PC-9 (cell line): ENCODE measurements at regions of chr15 and their contacts with region 1.

Region 1: DNA sequence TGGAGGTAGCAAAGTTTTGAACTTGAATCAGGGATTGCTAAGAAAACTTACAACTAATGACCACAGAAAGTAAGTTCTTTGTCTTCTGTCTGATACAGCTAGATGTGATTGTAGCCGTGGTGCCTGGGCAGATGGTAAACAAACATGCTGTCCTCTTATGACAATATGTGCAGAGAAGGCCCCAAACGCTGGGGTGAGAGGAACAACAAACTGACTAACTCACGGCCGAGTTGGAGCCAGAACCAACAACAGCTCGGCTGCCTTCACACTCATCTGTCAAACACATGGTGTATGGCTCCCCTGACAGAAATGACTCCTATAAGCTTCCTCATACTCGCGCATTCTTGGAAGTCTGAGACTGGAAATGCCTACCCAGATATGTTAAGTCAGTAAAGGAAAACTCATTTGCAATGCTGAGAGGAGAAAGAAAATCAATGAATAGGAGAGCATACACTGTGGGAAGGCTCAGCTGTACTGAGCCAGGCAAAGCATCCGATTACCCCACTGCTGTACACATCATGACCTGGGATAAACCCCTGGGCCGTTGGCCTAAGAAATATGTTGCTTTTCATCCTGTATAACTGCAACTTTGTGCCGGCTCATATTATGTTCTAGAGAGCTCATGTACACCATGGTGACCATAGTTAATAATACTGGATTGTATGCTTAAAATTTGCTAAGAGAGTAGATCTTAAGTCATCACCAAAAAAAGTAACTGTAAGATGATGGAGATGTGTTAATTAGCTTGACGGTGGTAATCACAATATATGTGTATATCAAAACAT is 5.7 kb downstream of the THBS1 start:
- DNase-seq: no peak
- H3K4me3 ChIP-seq: no peak overlapping the region
- H3K27ac ChIP-seq: no peak overlapping the region
- H3K4me1 ChIP-seq: peaks cover 11% of the 10 kb centered on the region; the same call in 1 of the 2 replicates
- H3K27me3 ChIP-seq: no peaks in the 10 kb centered on the region
- CTCF ChIP-seq: no peak

Region 2: GRCh38 chr15:39553947-39554693 is 32.5 kb before region 1 on chr15:
- CTCF ChIA-PET with region 1: no interaction called
- POLR2A ChIA-PET with region 1: no interaction called
- intact Hi-C with region 1: no loop called
- DNase-seq: no peak
- H3K4me3 ChIP-seq: no peak overlapping the region
- H3K27ac ChIP-seq: no peak overlapping the region
- H3K4me1 ChIP-seq: no peaks in the 10 kb centered on the region
- H3K27me3 ChIP-seq: no peaks in the 10 kb centered on the region
- CTCF ChIP-seq: no peak

Region 3: GRCh38 chr15:39642011-39642640 is 55.5 kb after region 1 on chr15:
- CTCF ChIA-PET with region 1: interaction called, 4 read pairs
- POLR2A ChIA-PET with region 1: interaction called, 10 read pairs
- intact Hi-C with region 1: no loop called
- DNase-seq: peak; percentile 33 to 87
- H3K4me3 ChIP-seq: peak overlapping the region; percentile 45; the same call in 1 of the 2 replicates
- H3K27ac ChIP-seq: peak overlapping the region; percentile 99
- H3K4me1 ChIP-seq: peaks cover 29% of the 10 kb centered on the region
- H3K27me3 ChIP-seq: no peaks in the 10 kb centered on the region
- CTCF ChIP-seq: no peak

Region 4: DNA sequence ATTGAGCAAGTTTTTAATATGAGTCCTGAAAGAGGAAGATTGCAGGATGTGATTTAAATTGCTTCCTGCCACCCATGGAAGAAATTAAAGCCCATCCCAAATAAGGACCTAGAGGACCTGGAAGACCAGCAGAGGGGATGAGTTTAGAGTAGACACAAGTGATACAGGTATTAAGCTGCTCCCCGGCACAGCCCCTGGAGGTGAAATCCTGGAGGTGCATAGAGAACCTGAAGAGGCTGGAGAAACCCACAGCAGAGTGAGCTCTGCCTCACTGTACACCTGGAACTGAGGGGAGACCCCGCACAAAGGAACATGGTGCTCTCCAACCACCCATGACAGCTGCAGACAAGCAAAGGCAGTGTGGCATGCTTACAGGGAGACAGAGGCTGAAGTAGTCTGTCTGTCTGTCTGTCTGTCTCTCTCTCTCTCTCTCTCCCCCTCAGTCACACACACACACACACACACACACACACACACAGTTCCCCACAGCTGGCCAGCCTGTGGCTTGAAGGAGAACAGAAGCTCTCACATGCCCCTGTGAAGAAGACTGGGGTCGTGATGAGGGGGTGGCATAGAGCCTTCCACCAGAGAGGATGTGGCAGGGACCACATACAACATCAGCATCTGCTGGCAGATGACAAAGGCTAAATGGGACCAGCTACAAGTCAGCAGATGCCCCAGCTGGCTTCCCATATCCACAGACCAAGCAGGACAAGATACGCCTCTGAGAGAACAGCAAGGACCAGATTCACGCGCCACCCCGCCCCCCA is 157.9 kb after region 1 on chr15:
- CTCF ChIA-PET with region 1: interaction called, 5 read pairs
- POLR2A ChIA-PET with region 1: interaction called, 12 read pairs
- intact Hi-C with region 1: no loop called
- DNase-seq: no peak
- H3K4me3 ChIP-seq: no peak overlapping the region
- H3K27ac ChIP-seq: 0 out of 2 replicates have a peak overlapping the region, but pooled peaks have one; percentile 32
- H3K4me1 ChIP-seq: peaks cover 33% of the 10 kb centered on the region
- H3K27me3 ChIP-seq: no peaks in the 10 kb centered on the region
- CTCF ChIP-seq: no peak